MCF 10A (cell line): ENCODE measurements at regions of chr18 and their contacts with region 1.

Region 1: GRCh38 chr18:5456577-5457463 is 87.0 kb downstream of the EPB41L3 start:
- DNase-seq: peak; percentile 17
- H3K4me3 Mint-ChIP-seq: peak overlapping the region; percentile 31
- H3K27ac Mint-ChIP-seq: no peak overlapping the region
- H3K4me1 Mint-ChIP-seq: no peaks in the 10 kb centered on the region
- H3K27me3 Mint-ChIP-seq: no peaks in the 10 kb centered on the region
- CTCF ChIP-seq: peak; percentile 30

Region 2: GRCh38 chr18:5546660-5547059 is 89.8 kb after region 1 on chr18:
- CTCF ChIA-PET with region 1: interaction called, 4 read pairs
- POLR2A ChIA-PET with region 1: interaction called, 3 read pairs
- intact Hi-C with region 1: loop called (anchors 1 kb)
- DNase-seq: peak; percentile 26
- H3K4me3 Mint-ChIP-seq: no peak overlapping the region
- H3K27ac Mint-ChIP-seq: no peak overlapping the region
- H3K4me1 Mint-ChIP-seq: no peaks in the 10 kb centered on the region
- H3K27me3 Mint-ChIP-seq: peaks cover 41% of the 10 kb centered on the region
- CTCF ChIP-seq: no peak

Region 3: DNA sequence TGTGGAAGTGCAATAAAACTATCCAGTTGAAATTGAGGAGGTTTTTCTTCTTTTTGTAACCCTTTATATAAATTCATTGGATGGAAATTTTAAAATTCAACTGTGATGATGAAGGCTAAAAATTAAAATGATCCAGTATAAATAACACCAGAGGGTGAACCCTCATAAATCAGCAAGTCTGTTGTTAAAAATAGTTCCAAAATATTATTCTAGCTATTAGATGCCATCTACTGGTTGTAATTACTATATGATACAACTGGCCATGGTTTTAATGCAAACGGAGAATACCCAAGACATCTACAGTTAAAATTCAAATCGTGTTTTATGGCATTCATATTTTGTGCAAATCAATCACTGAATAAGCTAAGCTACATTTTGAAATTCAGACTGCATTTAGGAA is 384.7 kb after region 1 on chr18:
- CTCF ChIA-PET with region 1: no interaction called
- POLR2A ChIA-PET with region 1: no interaction called
- intact Hi-C with region 1: loop called (anchors 2 kb)
- DNase-seq: no peak
- H3K4me3 Mint-ChIP-seq: no peak overlapping the region
- H3K27ac Mint-ChIP-seq: no peak overlapping the region
- H3K4me1 Mint-ChIP-seq: no peaks in the 10 kb centered on the region
- H3K27me3 Mint-ChIP-seq: peaks cover 32% of the 10 kb centered on the region
- CTCF ChIP-seq: peak; percentile 7

Region 4: GRCh38 chr18:6891788-6892187 is 1435.0 kb after region 1 on chr18:
- CTCF ChIA-PET with region 1: no interaction called
- POLR2A ChIA-PET with region 1: no interaction called
- intact Hi-C with region 1: loop called (anchors 10 kb)
- DNase-seq: no peak
- H3K4me3 Mint-ChIP-seq: no peak overlapping the region
- H3K27ac Mint-ChIP-seq: no peak overlapping the region
- H3K4me1 Mint-ChIP-seq: no peaks in the 10 kb centered on the region
- H3K27me3 Mint-ChIP-seq: no peaks in the 10 kb centered on the region
- CTCF ChIP-seq: no peak